ENCODE measurements at regions of chr7 and their contacts with region 1.

Region 1: GRCh38 chr7:37265006-37265405 is 183.7 kb downstream of the ELMO1 start:
- DNase-seq: no peak
- ATAC-seq: no peak
- H3K4me3 ChIP-seq: no peak overlapping the region
- H3K27ac ChIP-seq: no peak overlapping the region
- H3K4me1 ChIP-seq: peaks cover 0 to 35% (median 13%) of the 10 kb centered on the region in 9 donors
- H3K27me3 ChIP-seq: no peaks in the 10 kb centered on the region
- CTCF ChIP-seq: no peak

Region 2: DNA sequence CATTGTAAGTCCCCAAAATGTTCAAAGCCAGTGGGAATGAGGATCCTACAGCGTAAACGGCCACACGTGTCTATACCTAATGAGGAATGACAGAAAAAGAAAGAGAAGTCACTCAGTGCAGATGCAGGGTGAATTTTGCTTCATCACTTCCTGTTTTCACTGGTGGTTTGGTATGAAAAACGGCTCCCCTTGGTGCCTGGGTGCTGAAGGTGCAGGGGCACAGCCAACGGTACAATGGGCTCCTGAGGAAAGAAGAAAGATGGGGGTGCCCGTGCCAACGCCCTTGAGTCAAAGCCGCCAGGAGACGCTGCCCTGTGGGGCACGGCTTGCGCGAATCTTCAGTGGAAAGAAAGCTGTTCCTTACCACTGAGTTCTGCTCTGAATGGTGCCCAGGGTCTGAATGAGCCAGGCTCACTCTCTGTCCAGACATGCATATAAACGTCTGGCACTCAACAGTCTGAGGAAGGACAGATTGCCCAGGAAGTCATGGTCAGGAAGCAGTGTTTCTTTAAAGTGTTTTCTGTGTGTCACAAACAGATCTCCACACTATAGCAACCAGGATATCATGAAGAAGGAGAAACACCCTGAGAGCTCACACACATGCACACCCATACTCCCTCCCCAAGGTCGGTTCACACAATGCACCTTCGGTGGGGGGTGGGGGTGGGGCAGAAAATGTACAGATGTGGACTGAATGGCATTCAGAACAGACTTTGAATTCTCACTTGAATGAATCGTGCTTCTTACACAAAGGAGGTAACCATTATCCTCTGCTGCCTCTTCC is 77.9 kb after region 1 on chr7:
- intact Hi-C with region 1: loop called in 1 of 10 experiments (anchors 2 kb)
- DNase-seq: no peak
- ATAC-seq: peak in 7 of 8 donors; percentile 36 to 62 (median 56)
- H3K4me3 ChIP-seq: peak overlapping the region in 2 of 10 donors; percentile 14 to 50
- H3K27ac ChIP-seq: peak overlapping the region in 3 of 10 donors; percentile 6 to 88 (median 21)
- H3K4me1 ChIP-seq: peaks cover 7 to 56% (median 20%) of the 10 kb centered on the region in 9 donors
- H3K27me3 ChIP-seq: no peaks in the 10 kb centered on the region
- CTCF ChIP-seq: peak in 1 of 9 donors; percentile 28